Activated CD4-positive, alpha-beta T cell treated with anti-CD3 and anti-CD28 coated beads, Interleukin-2, amount 10 ng/mL, durations not matched to agents 24 days and 14 days (primary cell): ENCODE measurements at regions of chr4 and their contacts with region 1.

Region 1: DNA sequence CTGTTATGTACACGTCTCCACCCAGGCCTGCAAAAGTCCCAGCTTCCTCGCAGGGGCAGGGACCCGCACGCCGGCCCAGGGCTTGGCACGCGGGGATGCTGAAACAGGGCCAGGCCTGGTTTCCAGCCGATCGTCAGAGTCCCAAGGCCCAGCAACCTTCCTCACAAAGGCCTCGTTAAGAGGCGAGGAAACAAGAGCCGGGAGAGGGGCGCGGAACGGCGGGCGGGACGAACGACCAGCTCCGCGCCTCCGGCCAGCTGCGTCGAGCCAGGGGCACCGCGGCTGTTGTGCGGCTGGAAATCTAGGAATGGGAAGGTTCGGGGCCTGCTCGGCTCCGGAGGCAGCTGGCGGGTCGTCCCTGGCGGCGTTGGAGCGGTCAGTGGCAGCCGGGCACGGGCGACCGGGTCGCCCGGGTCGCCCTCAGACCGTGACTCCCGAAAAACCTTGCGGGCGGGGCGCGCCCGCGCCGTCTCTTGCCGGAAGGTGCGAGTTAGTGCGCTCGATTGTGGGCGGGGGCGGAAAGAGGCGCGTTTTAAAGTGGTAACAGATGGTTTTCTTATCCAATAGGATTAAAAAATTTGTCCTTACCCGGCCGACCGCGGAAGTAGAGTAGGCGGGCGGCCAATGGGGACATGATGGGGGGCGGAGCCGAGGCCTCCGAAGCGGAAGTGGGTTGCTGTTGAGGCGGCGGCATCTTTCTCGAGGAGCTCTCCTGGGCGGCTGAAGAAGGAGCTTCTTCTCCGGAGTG is at the start of gene RNF4:
- DNase-seq: peak; percentile 98
- H3K4me3 Mint-ChIP-seq: peak within 1 kb of the TSS; percentile 90
- H3K27ac Mint-ChIP-seq: peak within 1 kb of the TSS; percentile 99
- H3K4me1 Mint-ChIP-seq: peaks cover 30% of the 10 kb centered on the region
- H3K27me3 Mint-ChIP-seq: peaks cover 4% of the 10 kb centered on the region
- total RNA-seq, gene RNF4: 94.8 and 95.4 TPM in 2 replicates

Region 2: GRCh38 chr4:1721004-1721665 is 747.5 kb before region 1 on chr4 and contains the starts of genes TACC3 and TMEM129:
- intact Hi-C with region 1: loop called (anchors 5 kb)
- DNase-seq: peak; percentile 98
- H3K4me3 Mint-ChIP-seq: peak within 1 kb of the TSS; percentile 98
- H3K27ac Mint-ChIP-seq: peak within 1 kb of the TSS; percentile 99
- H3K4me1 Mint-ChIP-seq: peaks cover 40% of the 10 kb centered on the region
- H3K27me3 Mint-ChIP-seq: no peaks in the 10 kb centered on the region
- total RNA-seq, gene TACC3: 134 and 142 TPM in 2 replicates
- total RNA-seq, gene TMEM129: 26.6 and 27.8 TPM in 2 replicates

Region 3: GRCh38 chr4:2262143-2262943 is 206.3 kb before region 1 on chr4:
- intact Hi-C with region 1: loop called (anchors 1 kb)
- DNase-seq: peak; percentile 99
- H3K4me3 Mint-ChIP-seq: peak overlapping the region; percentile 76
- H3K27ac Mint-ChIP-seq: peak overlapping the region; percentile 82
- H3K4me1 Mint-ChIP-seq: no peaks in the 10 kb centered on the region
- H3K27me3 Mint-ChIP-seq: no peaks in the 10 kb centered on the region

Region 4: DNA sequence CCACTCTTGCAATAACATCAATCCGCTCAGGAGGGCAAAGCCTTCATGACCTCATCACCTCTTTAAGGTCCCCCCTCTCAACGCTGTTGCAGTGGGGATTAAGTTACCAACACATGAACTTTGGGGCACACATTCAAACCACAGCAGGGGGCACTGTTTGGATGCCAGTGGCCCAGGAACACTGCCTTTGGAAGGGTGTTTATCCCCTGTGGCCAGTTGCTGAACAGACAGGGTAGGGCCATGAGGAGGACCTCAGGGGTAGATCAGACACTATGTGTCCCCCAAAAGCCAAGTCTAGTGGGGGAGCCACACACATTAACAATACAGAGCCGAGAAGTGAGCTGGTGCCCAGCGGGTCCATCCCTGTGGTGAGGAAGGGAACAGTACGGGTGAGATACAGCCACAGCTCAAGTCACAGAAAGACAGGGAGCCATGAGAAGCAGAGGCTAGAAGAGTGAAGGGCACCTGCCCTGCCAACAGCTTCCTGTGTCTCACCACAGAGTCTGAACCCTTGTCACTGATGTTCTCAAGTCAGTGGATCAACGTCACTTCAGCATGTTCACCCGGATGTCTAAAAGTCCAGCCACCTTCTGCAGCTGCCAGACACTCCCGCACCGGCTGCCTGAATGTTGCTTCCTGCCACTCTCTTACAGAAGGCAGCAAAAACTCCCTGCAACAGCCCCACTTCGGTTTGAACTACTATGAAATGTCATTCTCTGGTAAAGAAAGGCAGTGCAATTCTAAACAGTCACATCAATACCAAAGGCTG is 186.9 kb before region 1 on chr4:
- intact Hi-C with region 1: loop called (anchors 5 kb)
- DNase-seq: peak; percentile 93
- H3K4me3 Mint-ChIP-seq: peak overlapping the region; percentile 78
- H3K27ac Mint-ChIP-seq: peak overlapping the region; percentile 94
- H3K4me1 Mint-ChIP-seq: peaks cover 26% of the 10 kb centered on the region
- H3K27me3 Mint-ChIP-seq: no peaks in the 10 kb centered on the region

Region 5: DNA sequence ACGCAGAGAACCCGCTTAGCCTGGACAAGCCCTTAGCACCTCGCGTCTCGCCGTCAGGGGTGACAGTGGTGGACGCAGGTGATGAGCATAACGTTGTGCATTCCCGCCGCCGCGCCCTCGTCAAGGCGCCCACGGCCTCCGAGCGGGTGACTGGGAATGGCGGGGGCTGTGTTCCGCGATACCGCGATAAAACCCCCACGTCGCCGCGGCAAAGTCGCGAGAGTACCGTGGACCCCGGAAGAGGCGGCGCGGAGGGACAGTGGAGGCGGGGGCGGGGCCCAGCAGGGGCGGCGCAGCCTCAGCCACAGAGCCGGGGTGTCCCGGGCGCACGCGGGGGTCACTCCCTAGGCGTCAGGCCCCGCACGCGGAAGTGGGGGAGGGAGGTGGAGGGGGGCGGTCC is 104.0 kb before region 1 on chr4:
- intact Hi-C with region 1: no loop called
- DNase-seq: peak; percentile 85
- H3K4me3 Mint-ChIP-seq: peak overlapping the region; percentile 47
- H3K27ac Mint-ChIP-seq: no peak overlapping the region
- H3K4me1 Mint-ChIP-seq: no peaks in the 10 kb centered on the region
- H3K27me3 Mint-ChIP-seq: no peaks in the 10 kb centered on the region

Region 6: DNA sequence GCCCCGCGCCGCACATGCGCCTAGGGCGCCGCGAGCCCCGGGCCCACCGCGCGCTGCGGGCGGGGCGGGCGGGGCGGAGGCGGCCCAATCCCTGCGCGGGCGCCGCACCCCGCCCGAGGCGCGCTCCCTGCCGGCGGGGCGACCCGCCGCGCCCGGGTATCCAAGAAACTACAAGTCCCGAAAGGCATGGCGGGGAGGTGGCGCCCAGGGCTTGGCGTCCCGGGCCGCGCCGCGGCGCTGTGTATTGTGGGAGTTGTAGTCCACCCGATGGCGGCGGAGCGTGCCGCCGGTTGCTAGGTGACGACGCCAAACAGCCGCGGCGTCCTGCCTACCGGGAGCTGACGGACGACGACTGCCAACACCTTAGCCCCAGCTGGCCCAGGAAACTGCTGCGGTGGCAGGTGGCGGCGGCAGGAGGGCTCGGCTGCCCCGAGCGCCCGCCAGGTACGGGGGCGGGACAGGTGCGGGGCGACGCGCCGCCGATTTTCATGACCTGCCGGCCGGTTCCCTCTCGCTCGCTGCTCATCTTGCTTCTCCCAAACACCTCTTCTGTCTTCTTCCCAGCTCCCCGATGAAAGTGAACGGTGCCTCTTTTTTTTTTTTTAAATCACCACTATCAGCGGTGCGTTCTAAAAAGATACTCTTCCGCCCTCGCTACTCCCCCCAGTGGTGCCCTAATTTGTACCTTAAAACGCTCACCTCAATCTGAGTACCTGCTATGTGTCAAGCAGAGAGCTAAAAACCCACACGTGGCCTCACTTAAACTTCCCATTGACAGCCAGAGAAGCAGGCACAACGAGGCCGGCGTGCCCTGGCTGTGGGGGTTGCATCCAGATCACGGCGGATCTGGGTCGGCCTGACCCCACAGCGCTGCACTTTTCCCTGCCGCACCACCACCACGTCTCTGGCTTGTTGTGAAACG is 49.7 kb before region 1 on chr4 and contains the start of gene CFAP99:
- intact Hi-C with region 1: loop called (anchors 1 kb)
- DNase-seq: peak; percentile 98
- H3K4me3 Mint-ChIP-seq: peak within 1 kb of the TSS; percentile 91
- H3K27ac Mint-ChIP-seq: peak within 1 kb of the TSS; percentile 86
- H3K4me1 Mint-ChIP-seq: peaks cover 35% of the 10 kb centered on the region
- H3K27me3 Mint-ChIP-seq: peaks cover 59% of the 10 kb centered on the region
- total RNA-seq, gene CFAP99: not detected in 2 replicates

Region 7: GRCh38 chr4:2484993-2485392 is 16.4 kb after region 1 on chr4:
- intact Hi-C with region 1: loop called (anchors 1 kb)
- DNase-seq: peak; percentile 91
- H3K4me3 Mint-ChIP-seq: peak overlapping the region; percentile 72
- H3K27ac Mint-ChIP-seq: peak overlapping the region; percentile 85
- H3K4me1 Mint-ChIP-seq: peaks cover 75% of the 10 kb centered on the region
- H3K27me3 Mint-ChIP-seq: no peaks in the 10 kb centered on the region